Activated T-helper 2 cell treated with anti-CD3 and anti-CD28 coated beads, Interferon-gamma antibody, Interleukin-2, Interleukin-4, amounts not matched to agents 10 μg/mL and 5 μg/mL and 100 μg/mL, durations not matched to agents 14 hours and 24 hours and 36 hours (primary cell): ENCODE measurements at regions of chrX and their contacts with region 1.

Region 1: GRCh38 chrX:148282504-148282903 is 217.9 kb upstream of the AFF2 start:
- DNase-seq: no peak
- H3K4me3 Mint-ChIP-seq: no peak overlapping the region
- H3K27ac Mint-ChIP-seq: peak overlapping the region; percentile 87
- H3K4me1 Mint-ChIP-seq: peaks cover 27% of the 10 kb centered on the region
- H3K27me3 Mint-ChIP-seq: no peaks in the 10 kb centered on the region

Region 2: DNA sequence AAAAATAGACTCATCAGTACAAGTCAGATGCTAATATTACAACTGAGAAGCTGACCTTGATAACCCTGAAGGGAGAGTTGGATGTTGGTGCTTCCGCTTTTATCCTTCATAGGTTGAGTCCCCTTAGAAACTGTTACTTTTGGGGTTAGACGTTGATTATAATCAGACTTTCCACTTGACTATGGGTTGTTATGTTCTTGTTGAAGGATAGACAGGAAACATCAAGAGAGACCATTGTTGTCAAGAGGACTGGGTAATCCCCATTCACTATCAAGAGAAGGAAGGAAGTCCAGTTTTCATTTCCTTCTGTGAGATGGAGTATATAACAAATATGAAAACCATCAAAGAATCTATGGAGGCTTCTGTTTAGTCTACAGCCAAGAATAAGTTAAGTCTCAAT is 12.0 kb before region 1 on chrX:
- intact Hi-C with region 1: loop called (anchors 1 kb)
- DNase-seq: no peak
- H3K4me3 Mint-ChIP-seq: no peak overlapping the region
- H3K27ac Mint-ChIP-seq: no peak overlapping the region
- H3K4me1 Mint-ChIP-seq: peaks cover 21% of the 10 kb centered on the region
- H3K27me3 Mint-ChIP-seq: no peaks in the 10 kb centered on the region

Region 3: GRCh38 chrX:148380650-148381561 is 98.4 kb after region 1 on chrX:
- intact Hi-C with region 1: loop called (anchors 1 kb)
- DNase-seq: peak; percentile 29
- H3K4me3 Mint-ChIP-seq: peak overlapping the region; percentile 64
- H3K27ac Mint-ChIP-seq: peak overlapping the region; percentile 88
- H3K4me1 Mint-ChIP-seq: peaks cover 24% of the 10 kb centered on the region
- H3K27me3 Mint-ChIP-seq: no peaks in the 10 kb centered on the region

Region 4: GRCh38 chrX:148609515-148610327 is 327.2 kb after region 1 on chrX:
- intact Hi-C with region 1: loop called (anchors 1 kb)
- DNase-seq: no peak
- H3K4me3 Mint-ChIP-seq: no peak overlapping the region
- H3K27ac Mint-ChIP-seq: peak overlapping the region; percentile 17
- H3K4me1 Mint-ChIP-seq: peaks cover 26% of the 10 kb centered on the region
- H3K27me3 Mint-ChIP-seq: no peaks in the 10 kb centered on the region